Heart right ventricle (tissue), 16 donors: ENCODE measurements at regions of chr1 and their contacts with region 1.

Region 1: GRCh38 chr1:214224611-214225354 is 56.2 kb upstream of the SMYD2 start:
- DNase-seq: peak; percentile 11 to 17
- ATAC-seq: peak in 5 of 8 donors; percentile 4 to 59 (median 31)
- H3K4me3 ChIP-seq: peak overlapping the region in 8 of 10 donors; percentile 12 to 41 (median 35)
- H3K27ac ChIP-seq: peak overlapping the region in 6 of 10 donors; percentile 11 to 68 (median 46)
- H3K4me1 ChIP-seq: peaks cover 0 to 24% (median 14%) of the 10 kb centered on the region in 9 donors
- H3K27me3 ChIP-seq: peaks cover 0 to 12% (median 3%) of the 10 kb centered on the region in 7 donors
- CTCF ChIP-seq: no peak

Region 2: DNA sequence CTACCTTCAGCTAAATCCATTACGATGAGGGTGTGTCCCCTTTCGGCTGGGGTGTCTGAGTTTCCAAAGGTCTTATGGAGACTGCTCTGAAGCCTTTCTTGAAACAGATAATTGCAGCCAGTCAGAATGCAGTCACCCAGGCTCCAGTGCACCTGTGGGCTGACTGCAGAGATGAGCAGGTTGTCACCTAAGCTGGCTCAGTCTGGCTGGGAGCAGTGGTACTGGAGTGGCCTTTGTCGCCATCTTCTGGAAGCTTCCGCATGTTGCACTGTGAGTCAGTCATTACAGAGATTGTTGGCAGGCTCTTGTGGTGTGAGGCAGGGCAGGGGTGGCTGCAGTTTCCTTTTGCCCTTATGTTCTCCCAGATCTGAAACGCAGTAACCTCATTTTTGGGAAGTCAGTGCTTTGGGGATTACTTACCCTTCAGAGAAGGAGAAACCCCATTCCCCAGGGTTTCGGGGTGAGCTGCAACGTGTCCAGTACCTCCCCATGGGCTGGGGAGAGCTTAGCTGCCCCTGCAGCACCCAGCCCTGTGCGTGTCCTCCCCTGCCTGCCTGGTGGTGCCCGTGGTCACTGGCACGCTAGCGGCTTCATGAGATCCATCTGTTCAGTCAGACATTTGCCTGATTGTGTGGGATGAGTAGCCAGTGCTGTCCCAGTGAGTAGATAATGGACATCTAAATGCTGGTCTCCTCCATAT is 104.1 kb after region 1 on chr1:
- intact Hi-C with region 1: loop called in 2 of 10 experiments (anchors 5 kb)
- DNase-seq: peak; percentile 74 to 83
- ATAC-seq: peak; percentile 83 to 91 (median 88)
- H3K4me3 ChIP-seq: no peak overlapping the region
- H3K27ac ChIP-seq: peak overlapping the region in 6 of 10 donors; percentile 31 to 86 (median 76)
- H3K4me1 ChIP-seq: peaks cover 6 to 62% (median 27%) of the 10 kb centered on the region in 9 donors
- H3K27me3 ChIP-seq: no peaks in the 10 kb centered on the region
- CTCF ChIP-seq: peak; percentile 83 to 96 (median 92)